ENCODE measurements at regions of chr1 and their contacts with region 1.

Region 1: GRCh38 chr1:113389953-113390834 is at the start of gene MAGI3:
- DNase-seq: peak; percentile 84 to 97 (median 91)
- ATAC-seq: peak; percentile 95
- H3K4me3 ChIP-seq: peak within 1 kb of the TSS; percentile 88
- H3K4me3 Mint-ChIP-seq: peak within 1 kb of the TSS; percentile 84 to 98 (median 94)
- H3K27ac ChIP-seq: peak within 1 kb of the TSS; percentile 71
- H3K27ac Mint-ChIP-seq: peak within 1 kb of the TSS; percentile 38 to 89 (median 85)
- H3K4me1 ChIP-seq: peaks cover 0 to 16% of the 10 kb centered on the region in 2 donors
- H3K4me1 Mint-ChIP-seq: peaks cover 22 to 31% (median 26%) of the 10 kb centered on the region in 7 donors
- H3K27me3 ChIP-seq: no peaks in the 10 kb centered on the region
- H3K27me3 Mint-ChIP-seq: peaks cover 0 to 42% (median 6%) of the 10 kb centered on the region in 5 donors
- total RNA-seq, gene MAGI3: 5.7 to 8.8 (median 7.2) TPM

Region 2: GRCh38 chr1:112955781-112956543 is 434.2 kb before region 1 on chr1 and contains the start of gene SLC16A1:
- CTCF ChIA-PET with region 1: no interaction called
- POLR2A ChIA-PET with region 1: no interaction called
- intact Hi-C with region 1: loop called (anchors 1 to 2 kb)
- DNase-seq: peak; percentile 80 to 94 (median 87)
- ATAC-seq: peak; percentile 90
- H3K4me3 ChIP-seq: peak within 1 kb of the TSS; percentile 97
- H3K4me3 Mint-ChIP-seq: peak within 1 kb of the TSS; percentile 71 to 100 (median 97)
- H3K27ac ChIP-seq: peak within 1 kb of the TSS; percentile 81
- H3K27ac Mint-ChIP-seq: peak within 1 kb of the TSS; percentile 25 to 100 (median 88)
- H3K4me1 ChIP-seq: peaks cover 16 to 17% of the 10 kb centered on the region in 2 donors
- H3K4me1 Mint-ChIP-seq: peaks cover 33 to 66% (median 57%) of the 10 kb centered on the region in 7 donors
- H3K27me3 ChIP-seq: no peaks in the 10 kb centered on the region
- H3K27me3 Mint-ChIP-seq: no peaks in the 10 kb centered on the region
- total RNA-seq, gene SLC16A1: 10.1 to 43.6 (median 19.1) TPM

Region 3: GRCh38 chr1:113123737-113124136 is 266.5 kb before region 1 on chr1:
- CTCF ChIA-PET with region 1: no interaction called
- POLR2A ChIA-PET with region 1: no interaction called
- intact Hi-C with region 1: no loop called
- DNase-seq: no peak
- ATAC-seq: no peak
- H3K4me3 ChIP-seq: no peak overlapping the region
- H3K4me3 Mint-ChIP-seq: no peak overlapping the region
- H3K27ac ChIP-seq: no peak overlapping the region
- H3K27ac Mint-ChIP-seq: peak overlapping the region in 2 of 9 donors; percentile 21 to 75
- H3K4me1 ChIP-seq: no peaks in the 10 kb centered on the region
- H3K4me1 Mint-ChIP-seq: peaks cover 0 to 8% (median 3%) of the 10 kb centered on the region in 7 donors
- H3K27me3 ChIP-seq: no peaks in the 10 kb centered on the region
- H3K27me3 Mint-ChIP-seq: no peaks in the 10 kb centered on the region

Region 4: DNA sequence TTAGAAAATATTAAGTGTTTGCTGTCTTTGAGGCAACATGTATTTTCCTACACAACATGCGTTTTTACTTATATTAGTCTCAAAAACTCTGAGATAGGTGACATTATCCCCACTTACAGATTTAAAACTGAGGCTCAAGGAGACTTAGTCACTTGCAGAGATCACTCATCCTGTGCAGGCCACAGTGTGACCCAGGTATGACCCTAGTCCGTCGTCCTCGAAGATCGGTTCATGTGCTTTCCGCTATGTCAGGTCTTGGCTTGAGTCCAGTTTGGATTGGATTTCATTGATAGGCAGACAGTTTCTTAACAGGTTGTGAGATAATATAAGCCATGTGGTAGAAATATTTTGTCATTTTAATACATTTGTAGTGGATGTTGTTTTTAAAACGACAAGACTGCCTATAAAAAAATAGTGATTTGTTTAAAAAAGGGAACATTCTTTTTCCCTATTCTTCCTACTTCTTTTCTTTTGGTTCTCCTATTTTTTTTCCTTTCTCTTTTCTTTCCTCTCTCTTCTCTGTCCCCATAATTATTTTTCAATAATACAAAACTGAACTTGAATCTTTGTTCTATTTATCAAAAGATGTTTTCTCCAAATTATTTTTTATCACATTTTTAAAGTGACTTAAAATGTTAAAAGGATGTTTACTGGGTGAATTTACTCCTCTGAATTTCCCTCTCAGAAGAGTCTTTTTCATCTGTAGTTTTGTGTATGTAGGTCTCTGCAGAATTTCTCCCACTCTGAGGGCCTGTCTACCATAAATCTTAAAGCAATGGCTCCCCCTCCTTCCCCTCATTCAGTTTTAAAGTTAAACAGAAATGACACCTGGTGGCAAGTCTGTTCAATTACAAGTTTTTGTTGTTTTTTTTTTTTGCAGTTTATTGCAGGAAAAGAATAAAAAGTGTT is 287.3 kb after region 1 on chr1:
- CTCF ChIA-PET with region 1: no interaction called
- POLR2A ChIA-PET with region 1: no interaction called
- intact Hi-C with region 1: loop called in 1 of 2 experiments (anchors 10 kb)
- DNase-seq: peak in 5 of 9 donors; percentile 23 to 49 (median 39)
- ATAC-seq: peak; percentile 60
- H3K4me3 ChIP-seq: no peak overlapping the region
- H3K4me3 Mint-ChIP-seq: no peak overlapping the region
- H3K27ac ChIP-seq: no peak overlapping the region
- H3K27ac Mint-ChIP-seq: no peak overlapping the region
- H3K4me1 ChIP-seq: no peaks in the 10 kb centered on the region
- H3K4me1 Mint-ChIP-seq: peaks cover 0 to 10% (median 0%) of the 10 kb centered on the region in 7 donors
- H3K27me3 ChIP-seq: no peaks in the 10 kb centered on the region
- H3K27me3 Mint-ChIP-seq: no peaks in the 10 kb centered on the region

Region 5: GRCh38 chr1:113871597-113872113 is 481.5 kb after region 1 on chr1 and contains the start of gene PTPN22:
- CTCF ChIA-PET with region 1: no interaction called
- POLR2A ChIA-PET with region 1: no interaction called
- intact Hi-C with region 1: loop called in 1 of 2 experiments (anchors 2 kb)
- DNase-seq: peak; percentile 41 to 91 (median 87)
- ATAC-seq: peak; percentile 98
- H3K4me3 ChIP-seq: peak within 1 kb of the TSS; percentile 81
- H3K4me3 Mint-ChIP-seq: peak within 1 kb of the TSS; percentile 82 to 95 (median 92)
- H3K27ac ChIP-seq: peak within 1 kb of the TSS; percentile 87
- H3K27ac Mint-ChIP-seq: peak within 1 kb of the TSS; percentile 94 to 99 (median 98)
- H3K4me1 ChIP-seq: peaks cover 30 to 65% of the 10 kb centered on the region in 2 donors
- H3K4me1 Mint-ChIP-seq: peaks cover 37 to 77% (median 72%) of the 10 kb centered on the region in 7 donors
- H3K27me3 ChIP-seq: no peaks in the 10 kb centered on the region
- H3K27me3 Mint-ChIP-seq: no peaks in the 10 kb centered on the region
- total RNA-seq, gene PTPN22: 22.2 to 76.7 (median 27.5) TPM

Region 6: DNA sequence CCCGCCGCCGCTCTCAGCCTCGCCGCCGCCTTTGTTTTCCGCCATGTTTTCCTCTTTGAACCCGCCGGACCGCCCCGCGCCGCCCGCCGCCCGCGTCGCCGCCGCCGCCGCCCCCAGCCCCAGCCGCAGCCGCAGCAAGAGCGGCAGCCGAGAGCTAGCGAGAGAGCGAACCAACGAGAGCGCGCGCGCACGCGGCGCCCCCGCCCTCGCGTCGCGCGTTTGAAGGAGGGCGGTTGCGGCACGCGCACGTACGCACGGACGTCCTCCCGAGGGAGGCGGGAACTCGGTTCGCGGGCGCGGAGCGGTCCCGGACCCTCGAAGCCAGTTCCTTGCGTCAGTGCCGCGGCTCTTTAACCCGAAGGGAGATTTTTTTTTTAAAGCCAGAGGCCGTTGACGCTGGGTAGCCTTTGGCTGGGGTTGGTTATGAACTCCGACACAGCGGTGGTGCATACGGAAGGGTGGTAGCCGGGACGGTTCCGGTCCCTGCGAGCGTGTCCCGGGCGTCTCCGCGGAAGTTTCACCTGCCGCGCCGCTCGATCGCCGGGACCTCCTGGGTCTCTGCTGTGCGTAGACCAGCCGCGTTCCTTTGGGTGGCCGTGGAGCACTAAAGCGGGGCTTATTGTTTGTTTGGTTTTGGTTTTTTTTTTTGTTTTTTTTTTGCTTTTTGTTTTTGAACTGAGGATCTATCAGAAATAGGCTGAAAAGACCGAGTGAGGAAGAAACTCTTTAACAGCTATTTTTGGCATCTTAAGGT is 1121.0 kb after region 1 on chr1 and contains the start of gene TRIM33:
- CTCF ChIA-PET with region 1: no interaction called
- POLR2A ChIA-PET with region 1: no interaction called
- intact Hi-C with region 1: loop called (anchors 2 to 10 kb)
- DNase-seq: peak; percentile 91 to 95 (median 93)
- ATAC-seq: peak; percentile 89
- H3K4me3 ChIP-seq: peak within 1 kb of the TSS; percentile 71
- H3K4me3 Mint-ChIP-seq: peak within 1 kb of the TSS; percentile 86 to 99 (median 97)
- H3K27ac ChIP-seq: peak within 1 kb of the TSS; percentile 100
- H3K27ac Mint-ChIP-seq: peak within 1 kb of the TSS; percentile 98 to 100 (median 99)
- H3K4me1 ChIP-seq: peaks cover 22 to 29% of the 10 kb centered on the region in 2 donors
- H3K4me1 Mint-ChIP-seq: peaks cover 41 to 63% (median 52%) of the 10 kb centered on the region in 7 donors
- H3K27me3 ChIP-seq: no peaks in the 10 kb centered on the region
- H3K27me3 Mint-ChIP-seq: peaks cover 0 to 7% (median 0%) of the 10 kb centered on the region in 5 donors
- total RNA-seq, gene TRIM33: 43.8 to 57.6 (median 51.1) TPM